HepG2 (cell line): ENCODE measurements at regions of chr12 and their contacts with region 1.

Region 1: GRCh38 chr12:57590536-57591479 is at the start of gene PIP4K2C:
- DNase-seq: peak; percentile 77
- ATAC-seq: peak; percentile 93
- H3K4me3 ChIP-seq: peak within 1 kb of the TSS; percentile 70 to 99 (median 92)
- H3K27ac ChIP-seq: peak within 1 kb of the TSS; percentile 63
- H3K4me1 ChIP-seq: peaks cover 22% of the 10 kb centered on the region
- H3K27me3 ChIP-seq: no peaks in the 10 kb centered on the region; a peak in 1 of 5 replicates
- CTCF ChIP-seq: peak; percentile 1; the same call in 1 of the 2 replicates
- EP300 ChIP-seq: 0 out of 4 replicates have a peak, but pooled peaks have one; percentile 11 to 18
- POLR2A ChIP-seq: peak; percentile 58 to 73; a peak in 3 of 4 replicates
- RAD21 ChIP-seq: no peak
- total RNA-seq, gene PIP4K2C: 23.6 and 26.4 TPM in 2 replicates

Region 2: DNA sequence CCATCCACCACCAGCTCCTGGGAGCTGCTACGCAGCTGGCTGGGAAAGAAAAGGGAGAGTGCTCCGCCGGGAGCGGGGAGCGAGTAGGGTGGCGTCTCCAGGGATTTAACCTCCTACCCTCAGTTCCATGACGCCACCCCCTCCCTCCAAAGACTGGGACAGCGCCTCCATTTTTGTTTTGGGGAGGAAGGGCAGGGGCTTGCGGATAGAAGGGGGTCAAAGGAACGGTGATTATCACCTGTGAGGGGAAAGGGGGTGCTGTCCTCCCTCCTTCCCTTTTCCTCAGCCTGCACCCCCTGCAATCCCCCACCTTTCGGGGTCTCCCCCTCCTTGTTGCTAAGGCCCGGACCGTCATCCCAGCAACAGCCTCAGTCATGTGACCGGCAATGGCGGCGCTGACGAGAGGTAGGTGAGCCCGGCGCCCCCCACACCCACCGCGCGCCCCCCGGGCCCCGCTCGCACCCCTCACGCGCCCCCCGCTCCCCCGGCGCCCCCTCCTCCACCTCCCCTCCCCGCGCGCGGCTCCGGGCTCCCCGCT is 13.7 kb after region 1 on chr12 and contains the start of gene DTX3:
- CTCF ChIA-PET with region 1: no interaction called
- POLR2A ChIA-PET with region 1: interaction called, 26 read pairs
- in situ Hi-C with region 1: no loop called
- intact Hi-C with region 1: no loop called
- DNase-seq: no peak
- ATAC-seq: peak; percentile 25
- H3K4me3 ChIP-seq: peak within 1 kb of the TSS; percentile 79 to 84 (median 80)
- H3K27ac ChIP-seq: peak within 1 kb of the TSS; percentile 26
- H3K4me1 ChIP-seq: peaks cover 27% of the 10 kb centered on the region
- H3K27me3 ChIP-seq: peaks cover 0 to 14% of the 10 kb centered on the region in 2 experiments; a peak in 1 of 5 replicates
- CTCF ChIP-seq: no peak
- EP300 ChIP-seq: no peak
- POLR2A ChIP-seq: no peak
- RAD21 ChIP-seq: no peak
- total RNA-seq, gene DTX3: 5.4 and 9.0 TPM in 2 replicates

Region 3: GRCh38 chr12:57611108-57611809 is 20.5 kb after region 1 on chr12 and contains the start of gene ARHGEF25:
- CTCF ChIA-PET with region 1: no interaction called
- POLR2A ChIA-PET with region 1: interaction called, 26 read pairs
- in situ Hi-C with region 1: no loop called
- intact Hi-C with region 1: no loop called
- DNase-seq: peak; percentile 41
- ATAC-seq: peak; percentile 80
- H3K4me3 ChIP-seq: peak within 1 kb of the TSS; percentile 71 to 78 (median 76)
- H3K27ac ChIP-seq: peak within 1 kb of the TSS; percentile 22
- H3K4me1 ChIP-seq: peaks cover 34% of the 10 kb centered on the region
- H3K27me3 ChIP-seq: peaks cover 0 to 19% of the 10 kb centered on the region in 2 experiments; a peak in 2 of 5 replicates
- CTCF ChIP-seq: peak; percentile 22; the same call in 1 of the 2 replicates
- EP300 ChIP-seq: no peak
- POLR2A ChIP-seq: peak; percentile 49 to 80; a peak in 3 of 4 replicates
- RAD21 ChIP-seq: no peak
- total RNA-seq, gene ARHGEF25: 10.1 and 11.5 TPM in 2 replicates

Region 4: GRCh38 chr12:57632694-57633477 is 42.1 kb after region 1 on chr12 and contains the start of gene B4GALNT1:
- CTCF ChIA-PET with region 1: no interaction called
- POLR2A ChIA-PET with region 1: no interaction called
- in situ Hi-C with region 1: no loop called
- intact Hi-C with region 1: loop called (anchors 2 kb)
- DNase-seq: no peak
- ATAC-seq: peak; percentile 91
- H3K4me3 ChIP-seq: peak within 1 kb of the TSS; percentile 66 to 77 (median 68)
- H3K27ac ChIP-seq: no peak within 1 kb of the TSS
- H3K4me1 ChIP-seq: peaks cover 22% of the 10 kb centered on the region
- H3K27me3 ChIP-seq: no peaks in the 10 kb centered on the region; a peak in 1 of 5 replicates
- CTCF ChIP-seq: peak; percentile 88
- EP300 ChIP-seq: no peak; a peak in 1 of 4 replicates
- POLR2A ChIP-seq: no peak
- RAD21 ChIP-seq: peak; percentile 92
- total RNA-seq, gene B4GALNT1: 1.9 and 4.5 TPM in 2 replicates